BJ (cell line): ENCODE measurements at regions of chr10 and their contacts with region 1.

Region 1: DNA sequence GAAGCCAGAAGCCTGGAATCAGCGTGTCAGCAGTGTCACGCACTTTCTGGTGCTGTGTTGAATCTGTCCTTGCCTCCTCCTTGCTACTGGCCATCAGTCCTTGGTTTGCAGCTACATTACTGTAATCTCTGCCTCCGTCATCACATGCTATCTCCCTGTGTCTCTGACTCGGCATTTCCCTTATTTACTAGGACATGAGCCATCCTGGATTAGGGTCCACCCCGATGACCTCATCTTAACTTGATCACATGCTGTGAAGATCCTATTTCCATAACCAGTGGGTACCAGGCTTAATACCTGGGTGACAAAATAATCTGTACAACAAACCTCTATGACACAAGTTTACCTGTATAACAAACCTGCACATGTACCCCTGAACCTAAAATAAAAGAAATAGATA is 518.0 kb upstream of the KLF6 start:
- DNase-seq: no peak
- H3K4me3 ChIP-seq: no peak overlapping the region
- H3K27me3 ChIP-seq: no peaks in the 10 kb centered on the region
- CTCF ChIP-seq: no peak

Region 2: GRCh38 chr10:4291990-4292389 is 11.1 kb before region 1 on chr10:
- CTCF ChIA-PET with region 1: interaction called, 10 read pairs
- POLR2A ChIA-PET with region 1: no interaction called
- DNase-seq: no peak
- H3K4me3 ChIP-seq: no peak overlapping the region
- H3K27me3 ChIP-seq: no peaks in the 10 kb centered on the region
- CTCF ChIP-seq: no peak

Region 3: GRCh38 chr10:4498711-4499251 is 195.7 kb after region 1 on chr10:
- CTCF ChIA-PET with region 1: no interaction called
- POLR2A ChIA-PET with region 1: no interaction called
- DNase-seq: peak; percentile 90
- H3K4me3 ChIP-seq: no peak overlapping the region
- H3K27me3 ChIP-seq: no peaks in the 10 kb centered on the region
- CTCF ChIP-seq: no peak

Region 4: GRCh38 chr10:4632757-4633156 is 329.7 kb after region 1 on chr10:
- CTCF ChIA-PET with region 1: no interaction called
- POLR2A ChIA-PET with region 1: no interaction called
- DNase-seq: no peak
- H3K4me3 ChIP-seq: no peak overlapping the region
- H3K27me3 ChIP-seq: no peaks in the 10 kb centered on the region
- CTCF ChIP-seq: no peak